ENCODE measurements at regions of chr3 and their contacts with region 1.

Region 1: GRCh38 chr3:9302425-9303181 is 53.2 kb upstream of the SRGAP3 start:
- DNase-seq: no peak
- H3K4me3 ChIP-seq: peak overlapping the region; percentile 12 to 53 (median 24)
- H3K27ac ChIP-seq: peak overlapping the region in 2 of 4 donors; percentile 2 to 19
- H3K4me1 ChIP-seq: peaks cover 0 to 18% (median 7%) of the 10 kb centered on the region in 3 donors
- H3K27me3 ChIP-seq: peaks cover 0 to 25% (median 0%) of the 10 kb centered on the region in 4 donors
- CTCF ChIP-seq: peak; percentile 77 to 95 (median 94)
- POLR2A ChIP-seq: no peak

Region 2: DNA sequence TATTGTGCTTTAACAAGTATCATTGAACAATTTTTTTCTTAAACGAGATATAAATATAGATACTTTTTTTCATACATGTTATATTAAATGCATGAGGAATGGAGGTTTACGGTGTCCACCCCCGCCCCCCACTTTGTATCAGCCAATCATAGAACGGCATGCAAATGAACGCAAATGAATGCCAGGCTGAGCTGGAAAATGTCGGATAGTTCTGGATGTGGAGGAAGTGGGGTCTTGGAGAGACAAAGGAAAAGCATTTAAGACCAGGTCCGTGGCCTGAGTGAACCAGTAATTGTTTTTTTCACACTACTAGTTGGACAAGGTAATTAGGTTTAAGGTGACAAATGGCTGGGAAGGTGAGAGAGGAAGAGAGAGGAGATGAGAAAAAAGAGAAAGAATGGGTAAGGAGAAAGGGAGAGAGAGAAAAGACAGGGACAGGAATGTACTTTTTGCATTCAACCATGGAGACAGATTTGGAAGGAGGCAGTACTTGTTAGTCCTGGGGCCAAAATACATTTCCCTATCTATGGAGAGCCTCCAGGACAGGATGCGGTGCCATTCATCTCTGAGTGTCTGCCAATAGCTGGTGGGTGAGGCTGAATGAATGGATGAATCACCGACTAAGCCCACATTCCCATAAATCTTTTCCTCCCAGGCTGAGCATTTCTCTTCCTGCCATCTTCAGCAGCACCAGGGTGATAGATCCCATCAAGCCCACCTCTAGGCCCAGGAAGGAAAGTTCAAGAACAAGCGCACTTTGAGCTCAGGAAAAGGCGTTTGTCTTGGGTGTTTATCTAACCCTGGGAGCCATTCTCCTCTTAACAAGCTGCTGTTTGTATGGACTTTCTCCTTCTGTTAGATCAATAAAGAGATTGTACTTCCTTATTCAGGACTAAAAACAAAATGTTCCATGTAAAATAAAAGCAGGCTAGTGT is 337.9 kb before region 1 on chr3:
- intact Hi-C with region 1: loop called (anchors 5 kb)
- DNase-seq: no peak
- H3K4me3 ChIP-seq: no peak overlapping the region
- H3K27ac ChIP-seq: peak overlapping the region; percentile 16 to 89 (median 72)
- H3K4me1 ChIP-seq: peaks cover 0 to 48% (median 18%) of the 10 kb centered on the region in 3 donors
- H3K27me3 ChIP-seq: peaks cover 0 to 20% (median 0%) of the 10 kb centered on the region in 4 donors
- CTCF ChIP-seq: no peak
- POLR2A ChIP-seq: no peak

Region 3: GRCh38 chr3:8987645-8988383 is 314.8 kb before region 1 on chr3:
- intact Hi-C with region 1: loop called (anchors 5 kb)
- DNase-seq: no peak
- H3K4me3 ChIP-seq: no peak overlapping the region
- H3K27ac ChIP-seq: no peak overlapping the region
- H3K4me1 ChIP-seq: peaks cover 0 to 3% (median 0%) of the 10 kb centered on the region in 3 donors
- H3K27me3 ChIP-seq: no peaks in the 10 kb centered on the region
- CTCF ChIP-seq: peak in 5 of 6 experiments; percentile 69 to 78 (median 70)
- POLR2A ChIP-seq: no peak

Region 4: GRCh38 chr3:9067352-9067975 is 235.1 kb before region 1 on chr3:
- intact Hi-C with region 1: loop called (anchors 10 kb)
- DNase-seq: no peak
- H3K4me3 ChIP-seq: no peak overlapping the region
- H3K27ac ChIP-seq: no peak overlapping the region
- H3K4me1 ChIP-seq: peaks cover 0 to 6% (median 0%) of the 10 kb centered on the region in 3 donors
- H3K27me3 ChIP-seq: no peaks in the 10 kb centered on the region
- CTCF ChIP-seq: peak in 5 of 6 experiments; percentile 80 to 91 (median 84)
- POLR2A ChIP-seq: no peak

Region 5: GRCh38 chr3:9508781-9509180 is 206.2 kb after region 1 on chr3:
- intact Hi-C with region 1: no loop called
- DNase-seq: no peak
- H3K4me3 ChIP-seq: no peak overlapping the region
- H3K27ac ChIP-seq: no peak overlapping the region
- H3K4me1 ChIP-seq: peaks cover 0 to 4% (median 0%) of the 10 kb centered on the region in 3 donors
- H3K27me3 ChIP-seq: peaks cover 3 to 61% (median 6%) of the 10 kb centered on the region in 4 donors
- CTCF ChIP-seq: no peak
- POLR2A ChIP-seq: no peak

Measured in esophagus squamous epithelium (tissue), 5 donors.